A549 (cell line): ENCODE measurements at regions of chr12 and their contacts with region 1.

Region 1: GRCh38 chr12:52213512-52214420 is 19.3 kb upstream of the KRT7 start:
- DNase-seq: peak; percentile 88 to 91
- ATAC-seq: peak; percentile 74 to 84
- H3K4me3 ChIP-seq: no peak overlapping the region
- H3K27ac ChIP-seq: peak overlapping the region; percentile 89 to 96
- H3K4me1 ChIP-seq: peaks cover 76% of the 10 kb centered on the region
- CTCF ChIP-seq: peak; percentile 97
- EP300 ChIP-seq: no peak
- POLR2A ChIP-seq: no peak
- RAD21 ChIP-seq: peak; percentile 97 to 98

Region 2: DNA sequence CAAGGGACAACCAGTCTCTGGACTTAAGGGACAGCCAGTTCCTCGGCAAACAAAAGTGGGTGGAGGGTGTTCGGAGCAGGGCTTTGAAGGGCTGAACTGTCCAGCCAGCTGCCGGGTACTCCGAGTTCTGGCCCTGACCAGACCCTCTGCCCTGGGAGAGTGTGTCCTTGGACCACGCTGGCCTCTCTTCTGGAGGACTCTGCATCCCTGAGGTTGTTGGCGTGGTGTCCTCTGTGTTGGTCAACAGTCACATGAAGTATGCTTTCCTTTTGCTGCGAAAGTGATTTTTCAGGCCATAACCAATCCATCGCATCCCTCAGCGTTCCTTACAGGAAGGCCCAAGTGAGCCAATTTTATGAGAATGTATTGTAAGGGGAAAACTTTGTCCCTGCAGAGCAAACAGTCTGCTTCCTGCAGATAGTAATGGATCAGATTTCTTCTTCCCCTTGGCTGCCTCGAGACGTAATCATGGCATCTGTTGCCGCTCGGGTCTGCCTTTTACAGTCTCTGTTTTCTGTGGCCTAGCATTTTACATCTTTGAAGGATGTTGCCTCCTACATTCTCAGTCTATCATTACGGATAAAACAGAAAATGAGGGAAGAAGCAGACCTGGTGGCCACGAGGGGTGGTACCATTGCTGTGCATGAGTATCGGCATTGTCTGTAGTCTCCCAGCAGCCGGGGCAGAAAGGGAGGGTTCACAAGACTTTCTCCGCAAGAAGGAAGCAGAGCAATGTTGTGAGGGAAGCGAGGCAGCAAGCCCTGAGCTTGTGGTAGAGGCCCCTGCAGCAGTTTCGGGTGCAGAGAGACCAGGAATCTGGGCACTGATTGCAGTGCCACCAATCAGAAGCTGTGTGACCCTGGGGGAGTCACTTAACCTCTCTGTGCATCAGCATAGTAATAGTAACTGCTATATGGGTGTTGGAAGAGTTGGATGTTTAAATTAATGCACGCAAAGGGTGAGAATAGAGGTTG is 86.9 kb before region 1 on chr12:
- CTCF ChIA-PET with region 1: no interaction called
- POLR2A ChIA-PET with region 1: no interaction called
- DNase-seq: peak in 1 of 2 experiments; percentile 1
- ATAC-seq: no peak
- H3K4me3 ChIP-seq: no peak overlapping the region
- H3K27ac ChIP-seq: no peak overlapping the region; a peak in 1 of 6 replicates
- H3K4me1 ChIP-seq: no peaks in the 10 kb centered on the region
- CTCF ChIP-seq: no peak
- EP300 ChIP-seq: no peak
- POLR2A ChIP-seq: no peak
- RAD21 ChIP-seq: no peak

Region 3: DNA sequence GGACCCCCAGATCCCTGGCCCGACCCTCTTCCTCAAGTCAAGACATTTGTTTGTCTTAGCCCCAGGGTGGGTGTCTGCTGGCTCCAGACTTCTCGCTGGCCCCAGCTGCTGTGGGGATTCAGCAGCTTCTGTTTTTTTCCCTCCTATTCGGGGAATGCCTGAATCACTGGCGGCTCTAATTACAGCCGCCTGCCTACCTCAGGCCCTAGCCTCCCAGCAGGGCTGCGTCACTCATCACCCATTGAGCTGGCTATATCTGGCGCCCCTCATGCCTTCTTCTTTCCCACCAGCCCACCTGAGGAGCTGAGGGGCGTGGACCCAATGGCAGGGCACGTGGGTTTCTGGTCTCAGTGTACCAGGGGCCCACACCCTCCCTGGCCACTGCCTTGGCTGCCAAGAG is 32.0 kb before region 1 on chr12:
- CTCF ChIA-PET with region 1: no interaction called
- POLR2A ChIA-PET with region 1: no interaction called
- DNase-seq: no peak
- ATAC-seq: no peak
- H3K4me3 ChIP-seq: no peak overlapping the region
- H3K27ac ChIP-seq: peak overlapping the region in 1 of 2 experiments; percentile 96; a peak in 2 of 6 replicates
- H3K4me1 ChIP-seq: peaks cover 46% of the 10 kb centered on the region
- CTCF ChIP-seq: no peak
- EP300 ChIP-seq: no peak
- POLR2A ChIP-seq: no peak
- RAD21 ChIP-seq: no peak

Region 4: GRCh38 chr12:52192173-52192791 is 21.5 kb before region 1 on chr12:
- CTCF ChIA-PET with region 1: no interaction called
- POLR2A ChIA-PET with region 1: interaction called, 10 read pairs
- DNase-seq: peak; percentile 99
- ATAC-seq: peak; percentile 91 to 92
- H3K4me3 ChIP-seq: peak overlapping the region; percentile 64
- H3K27ac ChIP-seq: peak overlapping the region; percentile 96 to 100
- H3K4me1 ChIP-seq: peaks cover 76% of the 10 kb centered on the region
- CTCF ChIP-seq: no peak
- EP300 ChIP-seq: peak; percentile 80 to 86; a peak in 4 of 5 replicates
- POLR2A ChIP-seq: no peak
- RAD21 ChIP-seq: peak in 1 of 2 experiments; percentile 27; a peak in 2 of 5 replicates

Region 5: DNA sequence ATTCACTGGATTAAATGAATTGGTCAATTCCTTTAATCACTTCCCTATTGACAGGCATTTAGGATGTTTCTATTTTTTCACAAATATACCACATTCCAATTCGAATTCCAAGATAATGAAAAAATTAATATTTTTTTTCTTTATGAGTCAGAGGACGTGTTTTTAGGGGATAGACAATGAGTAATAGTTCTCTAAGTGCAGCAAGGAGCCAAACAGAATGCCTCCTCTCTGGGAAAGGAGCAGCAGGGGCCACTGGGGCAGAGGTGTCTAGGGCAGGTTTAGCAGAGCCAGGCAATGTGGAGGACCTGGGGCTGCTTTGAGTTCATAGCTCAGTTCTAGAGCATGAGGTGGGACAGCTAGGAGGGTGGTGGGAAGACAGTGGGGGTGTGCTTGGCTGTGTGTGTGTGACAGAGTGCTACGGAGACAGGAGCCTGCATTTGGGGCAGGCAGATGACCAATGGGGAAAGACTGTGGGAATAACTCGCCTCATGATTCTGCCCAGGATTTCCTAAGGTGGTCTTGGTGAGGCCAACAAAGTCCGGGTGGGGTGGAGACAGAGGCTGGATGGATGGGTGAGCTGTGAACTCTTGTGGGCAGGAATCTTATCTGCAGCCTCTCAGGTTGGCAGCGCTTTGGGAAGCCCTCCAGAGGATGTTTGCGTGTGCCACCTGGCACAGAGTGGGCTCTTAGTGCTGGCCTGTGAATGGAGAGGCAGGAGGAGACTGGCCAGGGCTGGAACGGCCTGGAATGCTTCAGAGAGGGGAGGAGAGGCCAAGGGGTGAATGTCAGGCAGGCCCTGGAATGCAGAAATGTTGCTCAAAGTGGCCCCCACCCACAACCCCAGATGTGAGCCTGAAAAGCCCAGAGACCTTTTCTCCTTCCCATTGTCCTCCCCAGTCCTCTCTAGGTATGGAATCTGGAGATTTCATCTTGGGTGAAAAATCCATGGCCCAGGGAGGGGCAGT is 16.8 kb after region 1 on chr12:
- CTCF ChIA-PET with region 1: interaction called, 182 read pairs
- POLR2A ChIA-PET with region 1: interaction called, 8 read pairs
- DNase-seq: peak in 1 of 2 experiments; percentile 76
- ATAC-seq: peak; percentile 30 to 55; a peak in 3 of 6 replicates
- H3K4me3 ChIP-seq: no peak overlapping the region
- H3K27ac ChIP-seq: peak overlapping the region; percentile 97
- H3K4me1 ChIP-seq: peaks cover 48% of the 10 kb centered on the region
- CTCF ChIP-seq: no peak
- EP300 ChIP-seq: peak; percentile 67 to 71; a peak in 2 of 5 replicates
- POLR2A ChIP-seq: no peak
- RAD21 ChIP-seq: 0 out of 5 replicates have a peak, but pooled peaks of 1 of the 2 experiments have one; percentile 14

Region 6: GRCh38 chr12:52235822-52236692 is 22.3 kb after region 1 on chr12:
- CTCF ChIA-PET with region 1: interaction called, 182 read pairs
- POLR2A ChIA-PET with region 1: interaction called, 14 read pairs
- DNase-seq: peak in 1 of 2 experiments; percentile 24
- ATAC-seq: no peak
- H3K4me3 ChIP-seq: peak overlapping the region; percentile 93
- H3K27ac ChIP-seq: peak overlapping the region; percentile 97
- H3K4me1 ChIP-seq: peaks cover 73% of the 10 kb centered on the region
- CTCF ChIP-seq: no peak
- EP300 ChIP-seq: no peak
- POLR2A ChIP-seq: no peak
- RAD21 ChIP-seq: no peak

Region 7: DNA sequence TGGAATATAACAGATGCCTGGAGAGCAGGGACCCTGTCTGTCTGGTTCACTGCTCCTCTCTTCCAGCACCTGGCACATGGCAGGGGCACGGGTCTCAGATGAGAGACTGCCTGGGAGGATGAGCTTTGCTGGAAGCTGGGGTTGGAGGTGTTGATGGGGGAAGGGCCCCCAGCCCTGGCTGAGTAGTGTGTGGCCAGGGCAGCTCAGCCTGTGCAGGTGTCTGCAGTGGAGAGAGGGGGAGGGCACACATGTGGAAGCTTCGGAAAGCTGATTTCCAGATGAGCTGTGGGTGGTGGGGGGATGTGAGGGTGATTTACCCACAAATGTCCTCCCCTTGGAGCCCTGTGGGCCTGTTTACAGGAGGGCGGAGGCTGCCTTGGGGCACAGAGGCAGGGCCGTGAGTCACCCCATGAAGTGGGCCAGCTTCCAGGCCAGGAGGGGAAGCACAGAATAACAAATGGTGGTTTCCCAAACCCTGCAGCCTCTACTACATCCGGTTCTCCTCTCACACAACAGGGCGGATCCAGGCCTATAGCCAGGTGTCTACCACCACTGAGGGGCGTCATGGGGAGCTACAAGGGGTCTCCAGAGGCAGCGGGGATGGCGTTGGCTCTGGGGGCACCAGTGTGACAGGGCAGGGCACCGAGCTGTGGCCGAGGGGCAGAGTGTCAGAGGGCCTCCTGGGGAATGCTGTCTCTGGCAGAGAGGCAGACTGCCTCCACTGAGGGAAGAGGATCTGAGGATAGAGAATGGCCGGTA is 30.3 kb after region 1 on chr12:
- CTCF ChIA-PET with region 1: interaction called, 182 read pairs
- POLR2A ChIA-PET with region 1: interaction called, 3 read pairs
- DNase-seq: peak; percentile 92 to 93
- ATAC-seq: peak; percentile 22 to 31
- H3K4me3 ChIP-seq: peak overlapping the region; percentile 24; the same call in 1 of the 3 replicates
- H3K27ac ChIP-seq: peak overlapping the region; percentile 92 to 97
- H3K4me1 ChIP-seq: peaks cover 100% of the 10 kb centered on the region
- CTCF ChIP-seq: no peak
- EP300 ChIP-seq: peak; percentile 55 to 80; a peak in 3 of 5 replicates
- POLR2A ChIP-seq: no peak
- RAD21 ChIP-seq: no peak; a peak in 2 of 5 replicates

Region 8: GRCh38 chr12:52249051-52249461 is 35.3 kb after region 1 on chr12:
- CTCF ChIA-PET with region 1: interaction called, 41 read pairs
- POLR2A ChIA-PET with region 1: interaction called, 3 read pairs
- DNase-seq: peak in 1 of 2 experiments; percentile 71
- ATAC-seq: peak; percentile 0; a peak in 2 of 6 replicates
- H3K4me3 ChIP-seq: no peak overlapping the region
- H3K27ac ChIP-seq: peak overlapping the region; percentile 92 to 97
- H3K4me1 ChIP-seq: peaks cover 96% of the 10 kb centered on the region
- CTCF ChIP-seq: no peak
- EP300 ChIP-seq: no peak
- POLR2A ChIP-seq: no peak; the same call in 1 of the 2 replicates
- RAD21 ChIP-seq: 0 out of 5 replicates have a peak, but pooled peaks of 1 of the 2 experiments have one; percentile 2